ENCODE measurements at regions of chr7 and their contacts with region 1.

Region 1: GRCh38 chr7:38222481-38223096 is 44.5 kb downstream of the STARD3NL start:
- DNase-seq: peak; percentile 66 to 78 (median 71)
- H3K4me3 ChIP-seq: no peak overlapping the region
- H3K27ac ChIP-seq: peak overlapping the region in 1 of 2 experiments; percentile 52
- H3K4me1 ChIP-seq: peaks cover 0 to 16% (median 6%) of the 10 kb centered on the region in 4 experiments
- H3K27me3 ChIP-seq: no peaks in the 10 kb centered on the region

Region 2: GRCh38 chr7:38283809-38284208 is 61.2 kb after region 1 on chr7:
- CTCF ChIA-PET with region 1: no interaction called
- POLR2A ChIA-PET with region 1: no interaction called
- DNase-seq: no peak
- H3K4me3 ChIP-seq: no peak overlapping the region
- H3K27ac ChIP-seq: no peak overlapping the region
- H3K4me1 ChIP-seq: peaks cover 7 to 31% (median 13%) of the 10 kb centered on the region in 4 experiments
- H3K27me3 ChIP-seq: peaks cover 0 to 2% (median 0%) of the 10 kb centered on the region in 5 experiments

Region 3: DNA sequence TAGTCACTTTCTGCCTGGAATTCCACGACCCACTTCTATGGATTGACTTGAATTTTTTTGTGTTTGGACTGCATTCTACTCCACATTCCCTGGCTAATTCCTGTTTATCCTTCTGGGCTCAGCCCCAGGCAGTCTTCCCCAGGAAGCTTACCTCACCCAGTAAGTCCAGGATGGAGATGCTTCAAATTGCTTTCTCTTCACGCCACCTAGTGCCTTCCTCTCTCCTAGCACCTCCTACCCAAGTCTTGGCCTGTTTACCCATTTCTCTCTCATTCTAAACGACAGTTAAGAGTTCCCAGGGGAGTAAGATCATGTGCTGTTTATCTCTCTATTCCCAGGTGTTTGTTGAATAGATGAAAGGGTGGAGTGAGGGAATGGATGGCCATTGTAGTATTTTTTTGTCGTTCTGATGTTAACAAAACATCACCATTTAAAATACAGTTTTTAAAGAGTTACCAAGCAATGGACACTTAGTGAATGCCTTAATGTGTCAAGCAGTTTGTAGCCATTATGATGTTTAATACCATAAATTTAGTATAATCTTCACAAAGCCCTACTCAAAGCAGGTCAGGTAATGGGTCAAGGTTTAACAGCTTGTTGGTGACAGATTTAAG is 96.3 kb after region 1 on chr7:
- CTCF ChIA-PET with region 1: interaction called, 56 read pairs
- POLR2A ChIA-PET with region 1: no interaction called
- DNase-seq: peak; percentile 60 to 63 (median 61)
- H3K4me3 ChIP-seq: no peak overlapping the region
- H3K27ac ChIP-seq: no peak overlapping the region
- H3K4me1 ChIP-seq: peaks cover 7 to 45% (median 24%) of the 10 kb centered on the region in 4 experiments
- H3K27me3 ChIP-seq: no peaks in the 10 kb centered on the region

Measured in common myeloid progenitor, CD34-positive (primary cell).